ENCODE measurements at regions of chr7 and their contacts with region 1.

Region 1: GRCh38 chr7:111138196-111138569 is 47.3 kb downstream of the LRRN3 start:
- DNase-seq: peak; percentile 83
- ATAC-seq: peak; percentile 96
- H3K4me3 Mint-ChIP-seq: peak overlapping the region; percentile 53
- H3K27ac Mint-ChIP-seq: peak overlapping the region; percentile 93
- H3K4me1 Mint-ChIP-seq: peaks cover 33% of the 10 kb centered on the region
- H3K27me3 Mint-ChIP-seq: no peaks in the 10 kb centered on the region

Region 2: DNA sequence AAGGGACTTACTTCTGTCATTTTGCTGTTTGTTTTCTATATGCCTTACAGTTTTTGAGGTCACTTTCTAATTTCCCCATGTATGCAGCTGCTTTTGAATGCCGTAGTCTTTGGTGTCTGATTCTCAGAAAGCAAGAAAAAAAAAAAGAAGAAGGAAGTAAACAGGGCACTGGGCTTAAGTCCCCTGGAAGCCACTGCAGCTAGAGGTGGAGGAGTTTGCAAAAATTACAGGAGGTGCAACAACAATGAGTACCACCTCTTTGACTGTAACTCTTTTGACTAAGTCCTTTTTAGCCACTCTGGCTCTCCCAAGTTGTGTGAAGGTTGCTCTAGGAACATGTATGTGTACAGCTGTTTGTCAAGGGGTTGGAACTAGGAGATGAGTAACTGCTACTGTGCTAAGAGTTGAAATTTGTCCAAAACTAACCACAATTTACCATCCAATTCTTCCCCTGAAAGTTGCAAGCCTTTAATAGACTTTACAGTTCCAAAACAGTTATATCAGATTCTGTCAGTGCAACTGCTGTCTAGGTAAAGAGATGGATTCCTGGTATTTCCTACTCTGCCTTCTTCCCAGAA is 635.2 kb before region 1 on chr7:
- CTCF ChIA-PET with region 1: no interaction called
- POLR2A ChIA-PET with region 1: no interaction called
- intact Hi-C with region 1: no loop called
- DNase-seq: no peak
- ATAC-seq: no peak
- H3K4me3 Mint-ChIP-seq: no peak overlapping the region
- H3K27ac Mint-ChIP-seq: no peak overlapping the region
- H3K4me1 Mint-ChIP-seq: no peaks in the 10 kb centered on the region
- H3K27me3 Mint-ChIP-seq: no peaks in the 10 kb centered on the region

Region 3: DNA sequence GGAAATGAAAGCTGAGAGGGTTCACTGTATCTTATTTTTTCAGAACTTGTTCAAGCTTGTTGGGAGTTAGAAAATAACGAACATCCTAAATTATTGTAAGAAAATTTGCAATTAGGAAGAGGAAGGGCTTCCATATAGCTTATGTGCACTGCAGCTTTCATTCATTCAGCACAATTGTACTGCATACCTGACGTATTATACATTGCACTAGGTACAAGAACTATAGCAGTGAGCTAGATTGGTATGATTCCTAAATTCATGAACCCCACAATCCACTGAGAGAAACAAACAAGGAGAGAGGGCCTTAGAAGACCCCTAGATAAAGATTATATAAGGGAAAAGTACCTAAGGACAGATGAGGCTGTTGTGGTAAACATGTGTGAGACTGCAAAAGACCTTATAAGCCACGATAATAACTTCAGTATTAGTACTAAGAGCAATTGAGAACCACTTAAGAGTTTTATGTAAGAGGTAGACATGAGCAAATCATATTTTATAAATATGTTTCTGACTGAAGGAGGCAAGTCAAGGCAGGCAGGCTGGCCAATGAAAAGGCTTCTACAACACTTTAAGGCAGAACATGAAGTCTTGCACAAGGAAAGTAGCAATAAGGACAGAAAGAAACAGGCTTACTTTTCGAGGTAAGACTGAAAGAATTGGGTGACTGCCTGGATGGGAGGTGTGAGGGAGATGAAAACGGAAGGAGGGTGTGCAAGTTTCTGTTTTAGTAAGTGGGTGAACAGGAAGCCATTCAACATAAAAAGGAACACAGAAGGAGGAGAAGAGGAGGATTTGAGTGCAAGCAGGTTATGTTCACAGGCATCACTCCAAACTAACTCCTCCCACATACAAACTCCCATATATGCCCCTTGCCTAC is 125.1 kb before region 1 on chr7:
- CTCF ChIA-PET with region 1: interaction called, 3 read pairs
- POLR2A ChIA-PET with region 1: no interaction called
- intact Hi-C with region 1: loop called in 1 of 2 experiments (anchors 2 kb)
- DNase-seq: peak; percentile 57
- ATAC-seq: peak; percentile 81
- H3K4me3 Mint-ChIP-seq: peak overlapping the region; percentile 53
- H3K27ac Mint-ChIP-seq: peak overlapping the region; percentile 85
- H3K4me1 Mint-ChIP-seq: peaks cover 70% of the 10 kb centered on the region
- H3K27me3 Mint-ChIP-seq: no peaks in the 10 kb centered on the region

Region 4: GRCh38 chr7:111089822-111090426 is 48.3 kb before region 1 on chr7:
- CTCF ChIA-PET with region 1: interaction called, 3 read pairs
- POLR2A ChIA-PET with region 1: no interaction called
- intact Hi-C with region 1: loop called in 1 of 2 experiments (anchors 2 kb)
- DNase-seq: no peak
- ATAC-seq: no peak
- H3K4me3 Mint-ChIP-seq: no peak overlapping the region
- H3K27ac Mint-ChIP-seq: peak overlapping the region; percentile 80
- H3K4me1 Mint-ChIP-seq: peaks cover 86% of the 10 kb centered on the region
- H3K27me3 Mint-ChIP-seq: no peaks in the 10 kb centered on the region

Region 5: DNA sequence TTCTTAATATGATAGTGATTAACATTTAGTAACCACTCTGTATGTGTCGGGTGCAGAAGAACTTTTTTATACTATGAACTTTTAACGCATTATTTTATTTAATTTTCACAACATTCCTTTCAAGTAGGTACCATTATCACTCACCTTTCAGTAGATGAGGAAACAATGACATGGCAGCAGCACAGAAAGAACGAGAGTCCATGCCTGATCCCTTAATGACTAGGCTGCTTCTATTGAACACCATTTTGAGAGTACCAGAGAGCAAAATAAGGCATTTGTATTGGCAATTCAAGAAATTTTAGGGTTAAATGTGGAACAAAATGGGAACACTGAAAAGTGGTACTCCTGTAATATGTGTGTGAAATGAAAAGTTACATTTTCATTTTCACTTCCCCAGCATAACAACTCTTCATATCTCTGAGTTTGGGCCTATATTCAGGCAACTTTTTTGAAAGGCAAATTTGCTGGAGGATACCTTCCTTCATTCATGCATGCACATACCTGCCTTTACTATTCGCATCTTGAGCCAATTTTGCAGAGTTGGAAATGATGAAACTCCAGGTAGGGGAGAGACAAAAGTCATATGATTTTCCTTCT is 34.4 kb before region 1 on chr7:
- CTCF ChIA-PET with region 1: interaction called, 11 read pairs
- POLR2A ChIA-PET with region 1: interaction called, 4 read pairs
- intact Hi-C with region 1: loop called in 1 of 2 experiments (anchors 5 kb)
- DNase-seq: peak; percentile 27
- ATAC-seq: peak; percentile 66
- H3K4me3 Mint-ChIP-seq: no peak overlapping the region
- H3K27ac Mint-ChIP-seq: peak overlapping the region; percentile 70
- H3K4me1 Mint-ChIP-seq: peaks cover 56% of the 10 kb centered on the region
- H3K27me3 Mint-ChIP-seq: no peaks in the 10 kb centered on the region

Region 6: DNA sequence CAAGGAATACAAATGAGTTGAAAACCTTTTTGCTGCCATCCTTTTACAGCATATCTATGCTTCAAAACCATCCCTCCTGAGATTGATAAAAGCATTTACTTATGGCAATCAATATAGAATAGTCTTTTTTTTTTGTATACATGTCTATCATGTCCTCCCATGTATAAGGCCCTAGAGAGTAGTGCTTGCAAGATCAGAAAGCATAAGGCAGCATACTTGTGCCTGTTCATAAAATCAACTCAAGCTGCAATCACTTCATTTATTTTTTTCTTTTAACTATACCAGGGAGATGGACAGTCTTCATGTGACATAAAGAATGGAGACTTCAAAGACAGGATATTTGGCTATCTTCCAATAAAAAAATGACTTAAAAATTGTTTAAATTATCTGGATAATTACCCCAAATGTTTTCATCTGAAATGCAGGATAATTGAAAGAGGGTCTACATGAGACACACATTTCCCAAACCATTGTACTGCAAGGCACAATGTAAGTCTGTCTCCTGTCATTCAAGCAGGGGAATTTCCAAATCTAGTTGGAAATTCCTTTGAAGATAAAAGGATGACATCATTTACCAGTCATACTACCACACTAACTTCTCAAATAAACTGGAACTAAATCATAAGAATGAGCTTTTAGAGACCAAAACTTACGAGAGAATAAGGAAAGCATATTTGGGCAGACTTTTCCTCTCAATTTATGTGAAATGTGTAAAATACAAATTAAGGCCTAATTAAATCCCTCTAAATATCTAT is 24.7 kb before region 1 on chr7:
- CTCF ChIA-PET with region 1: interaction called, 5 read pairs
- POLR2A ChIA-PET with region 1: interaction called, 3 read pairs
- intact Hi-C with region 1: loop called in 1 of 2 experiments (anchors 2 kb)
- DNase-seq: no peak
- ATAC-seq: peak; percentile 75
- H3K4me3 Mint-ChIP-seq: peak overlapping the region; percentile 21
- H3K27ac Mint-ChIP-seq: peak overlapping the region; percentile 89
- H3K4me1 Mint-ChIP-seq: peaks cover 42% of the 10 kb centered on the region
- H3K27me3 Mint-ChIP-seq: no peaks in the 10 kb centered on the region

Region 7: DNA sequence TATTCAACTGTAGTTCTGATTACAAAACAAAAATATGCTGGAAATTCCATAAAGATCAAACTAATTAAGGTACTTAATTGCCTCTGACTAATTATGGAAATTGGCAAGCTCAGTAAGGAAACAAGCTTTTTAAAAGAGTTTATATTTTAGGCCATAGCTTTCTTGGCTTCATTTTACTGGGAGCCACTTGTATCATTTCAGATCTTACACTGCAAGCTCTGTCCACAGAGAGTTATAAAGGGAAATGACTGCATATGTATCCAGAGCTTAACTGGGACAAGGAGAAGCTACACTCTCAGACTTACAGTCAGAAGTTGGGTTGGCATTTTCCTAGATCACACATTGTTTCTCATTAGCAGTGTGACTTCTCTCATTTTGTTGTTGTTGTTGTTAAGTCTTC is 45.1 kb after region 1 on chr7:
- CTCF ChIA-PET with region 1: no interaction called
- POLR2A ChIA-PET with region 1: no interaction called
- intact Hi-C with region 1: no loop called
- DNase-seq: no peak
- ATAC-seq: no peak
- H3K4me3 Mint-ChIP-seq: no peak overlapping the region
- H3K27ac Mint-ChIP-seq: no peak overlapping the region
- H3K4me1 Mint-ChIP-seq: peaks cover 4% of the 10 kb centered on the region
- H3K27me3 Mint-ChIP-seq: no peaks in the 10 kb centered on the region